GM12878 (cell line): ENCODE measurements at regions of chr14 and their contacts with region 1.

Region 1: GRCh38 chr14:57486767-57487379 is 6.8 kb downstream of the CCDC198 start:
- DNase-seq: no peak
- ATAC-seq: peak; percentile 63
- H3K4me3 ChIP-seq: no peak overlapping the region
- H3K27ac ChIP-seq: no peak overlapping the region
- H3K4me1 ChIP-seq: peaks cover 11% of the 10 kb centered on the region
- H3K27me3 ChIP-seq: no peaks in the 10 kb centered on the region
- CTCF ChIP-seq: peak; percentile 59 to 76 (median 59)
- EP300 ChIP-seq: no peak
- POLR2A ChIP-seq: no peak
- RAD21 ChIP-seq: peak; percentile 59

Region 2: DNA sequence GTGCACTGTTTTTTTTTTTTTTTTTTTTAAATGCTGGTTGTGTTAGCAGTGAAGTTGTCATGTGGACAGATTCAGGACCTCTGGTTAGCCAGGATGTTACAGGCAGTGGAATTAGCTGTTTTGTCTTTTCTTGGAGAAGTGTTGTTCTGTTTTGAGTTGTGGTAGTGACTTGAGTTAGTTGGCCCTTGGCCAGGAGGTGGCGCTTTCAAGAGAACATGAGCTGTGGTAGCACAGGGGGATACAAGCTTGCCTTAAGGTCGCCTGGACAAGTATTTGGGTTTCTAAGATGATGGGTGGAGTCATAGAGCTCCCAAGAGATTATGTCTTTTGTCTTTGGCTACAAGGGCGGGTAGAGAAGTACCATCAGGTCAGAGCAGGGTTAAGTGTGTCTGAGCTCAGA is 40.1 kb after region 1 on chr14:
- CTCF ChIA-PET with region 1: interaction called, 16 read pairs
- POLR2A ChIA-PET with region 1: no interaction called
- RAD21 ChIA-PET with region 1: interaction called, 3 read pairs
- SMC1A ChIA-PET with region 1: interaction called, 6 read pairs
- in situ Hi-C with region 1: no loop called
- intact Hi-C with region 1: loop called (anchors 2 kb)
- DNase-seq: no peak
- ATAC-seq: peak; percentile 60
- H3K4me3 ChIP-seq: no peak overlapping the region
- H3K27ac ChIP-seq: no peak overlapping the region
- H3K4me1 ChIP-seq: no peaks in the 10 kb centered on the region
- H3K27me3 ChIP-seq: no peaks in the 10 kb centered on the region
- CTCF ChIP-seq: 0 out of 6 replicates have a peak, but pooled peaks of 1 of the 3 experiments have one; percentile 12
- EP300 ChIP-seq: no peak
- POLR2A ChIP-seq: no peak
- RAD21 ChIP-seq: no peak

Region 3: GRCh38 chr14:57574617-57575303 is 87.9 kb after region 1 on chr14:
- CTCF ChIA-PET with region 1: interaction called, 25 read pairs
- POLR2A ChIA-PET with region 1: interaction called, 5 read pairs
- RAD21 ChIA-PET with region 1: interaction called, 11 read pairs
- SMC1A ChIA-PET with region 1: interaction called, 6 read pairs
- in situ Hi-C with region 1: no loop called
- intact Hi-C with region 1: loop called (anchors 2 kb)
- DNase-seq: no peak
- ATAC-seq: peak; percentile 44
- H3K4me3 ChIP-seq: no peak overlapping the region
- H3K27ac ChIP-seq: no peak overlapping the region
- H3K4me1 ChIP-seq: no peaks in the 10 kb centered on the region
- H3K27me3 ChIP-seq: no peaks in the 10 kb centered on the region
- CTCF ChIP-seq: peak in 1 of 3 experiments; percentile 37; a peak in 1 of 6 replicates
- EP300 ChIP-seq: no peak
- POLR2A ChIP-seq: no peak
- RAD21 ChIP-seq: no peak

Region 4: GRCh38 chr14:58060077-58060476 is 573.2 kb after region 1 on chr14:
- CTCF ChIA-PET with region 1: no interaction called
- POLR2A ChIA-PET with region 1: no interaction called
- RAD21 ChIA-PET with region 1: no interaction called
- SMC1A ChIA-PET with region 1: no interaction called
- in situ Hi-C with region 1: loop called (anchors 10 kb)
- intact Hi-C with region 1: no loop called
- DNase-seq: no peak
- ATAC-seq: no peak
- H3K4me3 ChIP-seq: no peak overlapping the region
- H3K27ac ChIP-seq: no peak overlapping the region
- H3K4me1 ChIP-seq: no peaks in the 10 kb centered on the region
- H3K27me3 ChIP-seq: peaks cover 0 to 1% of the 10 kb centered on the region in 2 experiments; a peak in 3 of 4 replicates
- CTCF ChIP-seq: no peak
- EP300 ChIP-seq: no peak
- POLR2A ChIP-seq: no peak
- RAD21 ChIP-seq: no peak

Region 5: DNA sequence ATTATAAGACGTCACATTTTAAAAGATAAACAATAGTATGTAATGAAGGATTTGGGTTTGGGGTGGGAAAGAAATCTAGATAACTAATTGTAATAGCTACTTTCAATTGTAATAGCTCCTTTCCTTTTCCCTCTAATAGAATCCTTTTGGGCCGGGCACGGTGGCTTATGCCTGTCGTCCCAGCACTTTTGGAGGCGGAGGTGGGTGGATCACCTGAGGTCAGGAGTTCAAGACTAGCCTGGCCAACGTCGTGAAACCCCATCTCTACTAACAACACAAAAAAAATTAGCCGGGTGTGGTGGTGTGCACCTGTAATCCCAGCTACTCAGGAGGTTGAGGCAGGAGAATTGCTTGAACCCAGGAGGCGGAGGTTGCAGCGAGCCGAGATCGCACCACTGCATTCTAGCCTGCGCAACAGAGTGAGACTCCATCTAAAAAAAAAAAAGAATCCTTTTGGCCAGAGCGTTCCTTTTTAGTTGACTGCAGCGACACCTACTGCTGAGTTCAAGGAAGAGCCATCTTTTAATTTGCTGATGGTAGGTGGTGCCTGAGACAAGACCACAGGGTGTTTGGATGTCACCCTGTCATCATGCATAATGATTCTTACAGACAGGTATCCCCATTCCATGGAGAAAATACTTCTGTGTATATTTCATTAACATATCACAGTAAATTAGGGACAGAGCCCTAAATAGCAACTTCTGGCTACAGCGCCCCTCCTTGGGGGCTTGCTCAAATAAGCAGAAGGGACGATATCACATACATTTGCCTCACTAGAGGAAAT is 585.6 kb after region 1 on chr14:
- CTCF ChIA-PET with region 1: interaction called, 5 read pairs
- POLR2A ChIA-PET with region 1: no interaction called
- RAD21 ChIA-PET with region 1: interaction called, 4 read pairs
- SMC1A ChIA-PET with region 1: interaction called, 3 read pairs
- in situ Hi-C with region 1: loop called (anchors 10 kb)
- intact Hi-C with region 1: loop called (anchors 1 kb)
- DNase-seq: peak; percentile 13
- ATAC-seq: peak; percentile 91
- H3K4me3 ChIP-seq: no peak overlapping the region
- H3K27ac ChIP-seq: no peak overlapping the region
- H3K4me1 ChIP-seq: no peaks in the 10 kb centered on the region
- H3K27me3 ChIP-seq: no peaks in the 10 kb centered on the region
- CTCF ChIP-seq: peak; percentile 57 to 70 (median 69); a peak in 5 of 6 replicates
- EP300 ChIP-seq: no peak
- POLR2A ChIP-seq: no peak
- RAD21 ChIP-seq: peak; percentile 82